ENCODE measurements at regions of chr14 and their contacts with region 1.

Region 1: GRCh38 chr14:103292426-103293374 is 41.3 kb upstream of the EIF5 start:
- DNase-seq: peak; percentile 80
- ATAC-seq: peak; percentile 88 to 92

Region 2: GRCh38 chr14:103085106-103086091 is 207.3 kb before region 1 on chr14:
- intact Hi-C with region 1: loop called in 1 of 2 experiments (anchors 5 kb)
- DNase-seq: no peak
- ATAC-seq: no peak

Region 3: DNA sequence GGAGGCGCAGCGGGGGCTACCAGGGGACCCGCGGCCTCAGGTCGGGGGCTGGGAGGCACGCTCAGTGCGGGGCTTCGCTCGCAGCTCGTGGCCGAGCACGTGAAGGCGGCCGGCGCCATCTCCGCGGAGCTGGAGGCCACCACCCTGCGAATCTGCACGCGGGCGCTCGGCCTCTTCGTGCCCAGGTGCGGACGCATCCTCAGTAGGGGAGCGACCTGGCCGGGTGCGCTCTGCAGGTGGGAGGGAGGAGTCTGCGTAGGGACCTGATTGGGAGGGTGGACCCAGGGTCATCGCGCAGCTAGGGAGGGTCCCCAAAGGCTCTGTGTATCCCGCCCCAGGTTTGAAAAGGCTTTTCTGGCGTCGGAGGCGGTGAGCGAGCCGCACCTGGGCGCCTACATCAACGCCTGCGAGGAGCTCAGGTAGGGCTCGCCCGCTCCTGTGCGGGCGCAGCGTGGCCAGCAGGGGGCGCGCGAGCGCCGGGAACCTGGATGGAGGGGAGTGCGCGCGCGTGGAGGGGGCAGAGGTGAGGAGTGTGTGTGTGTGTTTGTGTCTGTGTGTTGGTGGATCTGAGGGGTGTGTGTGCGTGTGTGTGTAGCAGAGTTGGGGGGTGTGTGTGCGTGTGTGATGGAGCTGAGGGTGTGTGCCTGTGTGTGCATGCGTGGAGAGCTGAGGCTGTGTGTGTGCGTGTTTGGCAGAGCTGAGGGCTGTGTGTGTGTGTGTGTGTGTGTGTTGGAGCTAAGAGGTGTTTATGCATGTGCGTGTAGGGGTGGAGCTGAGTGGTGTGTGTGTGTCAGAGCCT is 187.8 kb before region 1 on chr14:
- intact Hi-C with region 1: loop called (anchors 5 kb)
- DNase-seq: peak; percentile 72
- ATAC-seq: peak; percentile 80 to 86

Region 4: GRCh38 chr14:103185051-103185992 is 107.4 kb before region 1 on chr14:
- intact Hi-C with region 1: loop called (anchors 2 to 10 kb)
- DNase-seq: no peak
- ATAC-seq: peak in 1 of 2 donors; percentile 70

Measured in left cardiac atrium (tissue), 4 donors.